HEK293 (cell line): ENCODE measurements at regions of chr13 and their contacts with region 1.

Region 1: DNA sequence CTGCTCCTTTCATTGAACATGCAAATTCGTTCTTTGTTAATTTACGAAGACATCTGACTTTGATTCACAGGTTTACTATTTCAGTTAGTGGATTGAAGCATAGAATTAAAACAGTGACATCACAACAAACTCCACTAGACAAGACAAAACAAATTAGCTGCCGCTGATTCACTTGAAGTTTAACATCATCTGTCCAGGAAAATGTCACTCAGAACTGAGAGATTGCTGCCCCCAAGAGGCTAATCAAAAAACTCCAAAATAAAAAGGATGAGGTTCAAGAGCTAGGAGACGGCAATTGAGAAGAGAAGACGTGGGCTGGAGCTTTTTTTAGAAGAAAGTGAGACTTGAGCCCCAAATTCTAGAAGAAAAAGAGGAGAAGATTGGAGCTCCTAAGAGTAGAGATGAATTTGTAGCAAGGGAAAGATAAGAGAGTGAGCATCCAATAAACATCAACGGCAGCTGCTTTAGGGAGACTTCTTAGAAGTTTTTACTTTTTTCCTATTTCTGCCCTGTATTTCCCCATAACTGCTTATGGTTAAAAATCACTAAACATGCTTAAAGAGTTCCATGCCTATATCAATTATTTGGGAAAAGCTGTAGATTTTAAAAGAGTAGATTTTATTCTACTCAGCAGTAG is 40.8 kb upstream of the TPP2 start:
- H3K4me3 ChIP-seq: no peak overlapping the region
- H3K27ac ChIP-seq: no peak overlapping the region
- H3K4me1 ChIP-seq: no peaks in the 10 kb centered on the region
- CTCF ChIP-seq: no peak

Region 2: GRCh38 chr13:101942038-101942437 is 614.0 kb before region 1 on chr13:
- CTCF ChIA-PET with region 1: interaction called, 10 read pairs
- POLR2A ChIA-PET with region 1: no interaction called
- H3K4me3 ChIP-seq: no peak overlapping the region
- H3K27ac ChIP-seq: no peak overlapping the region
- H3K4me1 ChIP-seq: no peaks in the 10 kb centered on the region
- CTCF ChIP-seq: no peak

Region 3: DNA sequence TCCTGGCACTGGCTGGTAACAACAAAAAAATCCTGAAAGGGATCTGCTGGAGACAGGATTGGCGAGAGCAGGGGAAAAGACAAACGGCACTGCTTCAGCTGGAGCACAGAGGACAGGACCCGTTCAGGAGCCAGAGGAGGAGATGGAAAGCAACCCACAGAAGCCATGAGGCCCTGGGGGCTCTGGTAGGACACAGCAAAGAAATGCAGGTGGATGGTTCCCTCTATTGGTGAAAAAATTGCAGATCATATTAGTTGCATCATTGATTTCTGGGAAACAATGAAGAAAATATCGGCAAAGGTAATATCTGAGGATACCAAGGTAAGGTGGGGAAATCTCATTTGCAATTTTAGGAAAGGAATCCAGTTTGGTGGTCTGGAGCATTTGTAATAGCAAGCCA is 15.0 kb after region 1 on chr13:
- CTCF ChIA-PET with region 1: interaction called, 18 read pairs
- POLR2A ChIA-PET with region 1: no interaction called
- H3K4me3 ChIP-seq: no peak overlapping the region
- H3K27ac ChIP-seq: no peak overlapping the region
- H3K4me1 ChIP-seq: no peaks in the 10 kb centered on the region
- CTCF ChIP-seq: no peak

Region 4: DNA sequence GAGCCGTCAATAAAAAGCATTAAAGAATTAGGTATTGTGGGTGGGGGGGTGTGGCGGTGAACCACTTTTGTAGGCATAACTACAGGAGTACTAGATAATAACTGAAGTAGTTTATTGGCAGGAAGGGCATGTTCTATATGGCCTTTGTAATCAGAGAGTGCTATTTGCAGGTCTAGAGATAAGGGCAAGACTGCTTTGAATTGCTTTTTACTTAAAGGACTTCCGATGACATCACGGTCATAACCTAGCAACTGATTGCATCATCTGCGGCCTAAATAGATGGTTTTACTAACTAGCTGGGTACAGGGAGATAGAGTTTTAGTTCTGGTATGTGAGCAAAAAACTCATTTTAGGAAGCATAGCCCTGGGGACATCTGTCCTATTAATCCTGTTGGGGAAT is 114.1 kb after region 1 on chr13:
- CTCF ChIA-PET with region 1: no interaction called
- POLR2A ChIA-PET with region 1: no interaction called
- H3K4me3 ChIP-seq: no peak overlapping the region
- H3K27ac ChIP-seq: no peak overlapping the region
- H3K4me1 ChIP-seq: no peaks in the 10 kb centered on the region
- CTCF ChIP-seq: no peak